ENCODE measurements at regions of chr7 and their contacts with region 1.

Region 1: DNA sequence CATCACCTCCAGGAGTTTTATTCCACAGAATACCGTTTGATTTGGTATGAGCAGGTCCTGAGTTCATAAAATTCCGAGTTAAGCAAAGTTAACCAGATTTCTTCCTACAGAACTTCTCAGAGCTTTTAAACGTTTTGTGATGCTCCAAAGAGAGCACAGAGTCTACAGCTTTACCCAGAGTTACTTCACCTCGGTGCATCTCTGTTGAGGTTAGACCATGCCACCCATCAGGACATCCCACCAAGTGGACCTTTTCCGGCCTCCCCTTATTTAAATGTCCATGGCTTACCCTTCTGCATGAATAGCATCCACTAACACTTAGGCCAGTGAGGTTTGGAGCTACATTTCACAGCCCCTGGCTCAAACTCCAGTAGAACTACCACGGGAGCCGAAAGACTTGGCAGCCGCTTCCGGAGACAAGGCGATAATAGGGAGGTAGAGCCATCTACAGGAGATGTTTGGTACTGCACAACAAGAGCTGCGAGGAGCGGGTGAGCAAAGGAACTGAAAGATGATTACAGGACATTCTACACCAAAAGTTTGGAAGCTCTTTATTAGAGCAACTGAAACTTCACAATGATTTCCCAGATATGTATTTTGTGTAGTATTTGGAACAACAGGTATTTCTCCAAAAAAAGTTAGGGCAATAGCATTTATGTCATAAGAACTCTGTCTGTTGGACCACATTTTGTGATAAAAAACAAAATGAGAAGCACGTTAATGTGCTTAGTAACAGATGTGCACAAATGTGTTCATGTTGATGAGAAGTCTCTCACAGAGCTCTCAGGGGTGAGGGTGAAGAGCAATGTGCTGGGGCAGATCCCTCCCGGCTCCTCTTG is 174.7 kb downstream of the HERPUD2 start:
- H3K4me3 Mint-ChIP-seq: no peak overlapping the region
- H3K27ac Mint-ChIP-seq: no peak overlapping the region
- H3K4me1 Mint-ChIP-seq: peaks cover 5% of the 10 kb centered on the region
- H3K27me3 Mint-ChIP-seq: peaks cover 25% of the 10 kb centered on the region

Region 2: DNA sequence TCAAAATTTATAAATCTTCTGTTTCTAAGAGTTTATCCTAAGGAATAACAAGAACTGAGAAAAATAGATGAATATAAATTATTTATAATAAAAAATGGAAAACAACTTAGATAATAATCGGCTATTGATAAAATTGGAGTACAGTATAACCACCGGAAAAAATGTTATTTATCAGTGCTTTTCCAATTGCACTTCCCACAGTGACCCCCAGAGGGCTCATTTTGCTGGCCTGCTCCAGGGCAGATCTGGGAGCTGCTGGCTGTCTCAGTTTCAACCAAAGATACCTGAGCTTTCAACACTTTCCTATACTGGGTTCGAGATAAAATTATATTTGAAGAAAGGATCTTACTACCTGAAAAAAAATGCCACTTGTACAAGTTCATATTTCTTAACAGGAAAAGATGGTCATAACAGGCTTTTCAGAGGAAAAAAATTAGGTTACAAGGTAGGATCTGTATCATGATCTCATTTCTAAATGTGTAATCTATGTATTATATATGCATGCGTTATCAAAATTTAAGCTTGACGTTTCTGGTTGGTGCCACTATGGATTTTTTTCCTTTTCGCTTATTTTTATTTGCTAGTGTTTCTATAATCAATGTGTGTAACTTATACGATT is 696.4 kb before region 1 on chr7:
- intact Hi-C with region 1: loop called (anchors 5 kb)
- H3K4me3 Mint-ChIP-seq: no peak overlapping the region
- H3K27ac Mint-ChIP-seq: no peak overlapping the region
- H3K4me1 Mint-ChIP-seq: no peaks in the 10 kb centered on the region
- H3K27me3 Mint-ChIP-seq: no peaks in the 10 kb centered on the region

Region 3: DNA sequence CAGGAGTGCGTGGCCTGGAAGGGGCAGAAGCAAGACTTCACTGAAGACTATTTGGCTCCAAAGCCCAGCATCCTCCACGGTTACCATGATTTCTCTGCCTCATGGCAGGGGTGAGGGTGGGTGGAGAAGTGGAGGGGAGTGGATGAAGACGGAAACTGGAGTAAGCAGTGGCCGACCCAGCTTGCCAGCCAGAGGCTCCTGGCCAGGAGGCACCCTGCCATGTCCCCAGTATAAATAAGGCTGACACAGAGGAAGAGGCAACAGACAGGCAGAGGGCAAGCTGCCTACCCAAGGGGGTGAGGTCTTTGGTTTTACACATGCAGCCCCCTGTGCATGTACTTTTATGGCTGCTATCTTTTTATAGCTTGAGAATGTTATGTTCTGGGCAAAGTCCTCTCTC is 163.7 kb before region 1 on chr7:
- intact Hi-C with region 1: no loop called
- H3K4me3 Mint-ChIP-seq: no peak overlapping the region
- H3K27ac Mint-ChIP-seq: no peak overlapping the region
- H3K4me1 Mint-ChIP-seq: no peaks in the 10 kb centered on the region
- H3K27me3 Mint-ChIP-seq: peaks cover 1% of the 10 kb centered on the region

Region 4: DNA sequence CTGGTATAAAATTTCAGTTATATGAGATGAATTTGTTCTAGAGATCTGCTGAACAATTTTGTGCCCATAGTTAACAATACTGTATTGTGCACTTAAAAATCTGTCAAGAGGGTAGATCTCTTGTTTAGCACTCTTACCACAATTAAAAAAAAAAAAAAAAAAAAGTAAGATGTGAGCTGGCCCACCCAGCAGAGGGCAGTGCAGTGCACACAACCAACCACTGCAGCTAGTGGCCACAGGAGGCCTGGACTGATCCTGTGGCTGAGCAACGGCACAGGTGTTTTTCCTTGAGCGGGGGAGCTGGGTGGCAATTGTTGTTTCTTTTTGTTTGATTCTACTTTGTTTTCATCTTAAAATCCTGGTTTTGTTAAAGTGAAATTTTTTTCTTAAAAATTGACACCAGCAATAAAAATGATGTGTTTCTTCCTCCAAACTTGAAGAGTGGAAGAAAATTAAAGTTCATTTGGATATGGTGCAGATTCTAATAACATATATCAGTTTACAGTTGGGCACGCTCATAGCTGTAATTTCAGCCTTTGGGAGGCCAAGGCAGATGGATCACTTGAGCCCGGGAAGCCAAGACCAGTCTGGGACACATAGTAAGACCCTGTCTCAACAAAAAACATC is 95.2 kb before region 1 on chr7:
- intact Hi-C with region 1: loop called (anchors 2 kb)
- H3K4me3 Mint-ChIP-seq: no peak overlapping the region
- H3K27ac Mint-ChIP-seq: no peak overlapping the region
- H3K4me1 Mint-ChIP-seq: no peaks in the 10 kb centered on the region
- H3K27me3 Mint-ChIP-seq: peaks cover 4% of the 10 kb centered on the region

Measured in dendritic cell treated with granulocyte-macrophage colony-stimulating factor and Interleukin-4, amounts not matched to agents 40 ng/mL and 50 ng/mL, for 4 days (primary cell).